Activated naive CD4-positive, alpha-beta T cell treated with anti-CD3 and anti-CD28 coated beads for 36 hours (primary cell): ENCODE measurements at regions of chr6 and their contacts with region 1.

Region 1: GRCh38 chr6:11317885-11318771 is 85.7 kb upstream of the NEDD9 start:
- DNase-seq: peak; percentile 91
- H3K4me3 Mint-ChIP-seq: no peak overlapping the region
- H3K27ac Mint-ChIP-seq: peak overlapping the region; percentile 90
- H3K4me1 Mint-ChIP-seq: peaks cover 43% of the 10 kb centered on the region
- H3K27me3 Mint-ChIP-seq: no peaks in the 10 kb centered on the region

Region 2: GRCh38 chr6:11198663-11199603 is 119.2 kb before region 1 on chr6:
- CTCF ChIA-PET with region 1: no interaction called
- intact Hi-C with region 1: loop called (anchors 1 kb)
- DNase-seq: peak; percentile 47
- H3K4me3 Mint-ChIP-seq: no peak overlapping the region
- H3K27ac Mint-ChIP-seq: peak overlapping the region; percentile 71
- H3K4me1 Mint-ChIP-seq: peaks cover 40% of the 10 kb centered on the region
- H3K27me3 Mint-ChIP-seq: no peaks in the 10 kb centered on the region

Region 3: DNA sequence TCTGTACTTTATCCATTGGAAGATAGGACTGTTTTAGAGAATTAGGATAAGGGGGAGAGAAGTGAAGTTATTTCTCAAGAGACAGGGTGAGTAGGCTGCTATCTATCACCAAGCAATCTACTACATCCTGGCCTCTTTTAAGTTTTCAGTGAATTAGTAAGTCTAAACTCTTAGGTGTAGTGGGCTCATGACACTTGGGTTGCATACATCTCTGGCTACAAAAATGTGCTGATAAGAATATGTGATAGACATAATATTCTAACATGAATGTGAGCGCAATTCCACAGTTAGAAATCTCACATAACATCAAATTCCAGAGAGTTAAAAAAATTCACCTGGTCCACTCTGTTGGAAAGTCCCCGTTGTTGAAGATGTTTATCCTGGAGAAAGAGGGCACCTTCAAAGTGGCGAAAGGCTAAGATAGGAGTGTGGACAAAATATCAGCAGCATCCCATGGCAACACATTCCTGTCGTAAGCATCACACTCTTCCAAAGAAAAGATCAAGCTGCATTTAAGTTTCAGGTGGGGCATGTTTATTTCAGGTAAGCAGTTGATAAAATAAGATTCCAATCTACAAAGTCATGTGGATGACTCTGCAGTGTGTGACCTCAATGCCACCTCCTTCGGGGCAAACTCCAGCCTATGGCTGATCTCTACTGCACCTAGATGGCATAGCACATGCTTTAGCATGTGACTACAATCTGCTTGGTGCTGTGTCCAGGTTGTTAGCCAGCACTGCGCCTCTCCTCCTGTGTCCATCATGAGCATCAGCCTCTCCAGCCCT is 26.0 kb after region 1 on chr6:
- CTCF ChIA-PET with region 1: no interaction called
- intact Hi-C with region 1: loop called (anchors 1 kb)
- DNase-seq: no peak
- H3K4me3 Mint-ChIP-seq: no peak overlapping the region
- H3K27ac Mint-ChIP-seq: peak overlapping the region; percentile 81
- H3K4me1 Mint-ChIP-seq: peaks cover 86% of the 10 kb centered on the region
- H3K27me3 Mint-ChIP-seq: no peaks in the 10 kb centered on the region

Region 4: GRCh38 chr6:11381801-11382513 is 63.8 kb after region 1 on chr6:
- CTCF ChIA-PET with region 1: interaction called, 3 read pairs
- intact Hi-C with region 1: loop called (anchors 1 kb)
- DNase-seq: peak; percentile 83
- H3K4me3 Mint-ChIP-seq: peak overlapping the region; percentile 86
- H3K27ac Mint-ChIP-seq: peak overlapping the region; percentile 91
- H3K4me1 Mint-ChIP-seq: peaks cover 57% of the 10 kb centered on the region
- H3K27me3 Mint-ChIP-seq: no peaks in the 10 kb centered on the region

Region 5: DNA sequence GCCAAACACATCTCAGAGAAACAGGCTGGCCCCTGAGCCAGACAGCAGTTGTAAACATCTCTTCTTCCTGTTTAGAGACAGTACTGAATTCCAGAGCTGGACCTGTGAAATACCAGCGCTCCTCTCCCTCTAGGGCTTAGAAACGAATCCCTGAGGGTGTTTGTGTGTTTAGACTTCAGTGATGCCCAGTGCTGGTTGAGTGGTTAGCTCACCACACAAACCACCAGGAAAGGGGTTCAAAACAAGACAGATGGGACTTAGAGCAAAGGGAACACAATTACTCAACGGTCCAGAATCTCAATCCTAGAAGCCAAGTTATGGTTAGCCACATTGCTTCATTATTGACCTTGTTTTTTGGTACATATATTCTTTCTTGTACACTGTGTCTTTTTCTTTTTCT is 110.8 kb after region 1 on chr6:
- CTCF ChIA-PET with region 1: no interaction called
- intact Hi-C with region 1: no loop called
- DNase-seq: no peak
- H3K4me3 Mint-ChIP-seq: no peak overlapping the region
- H3K27ac Mint-ChIP-seq: no peak overlapping the region
- H3K4me1 Mint-ChIP-seq: peaks cover 35% of the 10 kb centered on the region
- H3K27me3 Mint-ChIP-seq: no peaks in the 10 kb centered on the region

Region 6: DNA sequence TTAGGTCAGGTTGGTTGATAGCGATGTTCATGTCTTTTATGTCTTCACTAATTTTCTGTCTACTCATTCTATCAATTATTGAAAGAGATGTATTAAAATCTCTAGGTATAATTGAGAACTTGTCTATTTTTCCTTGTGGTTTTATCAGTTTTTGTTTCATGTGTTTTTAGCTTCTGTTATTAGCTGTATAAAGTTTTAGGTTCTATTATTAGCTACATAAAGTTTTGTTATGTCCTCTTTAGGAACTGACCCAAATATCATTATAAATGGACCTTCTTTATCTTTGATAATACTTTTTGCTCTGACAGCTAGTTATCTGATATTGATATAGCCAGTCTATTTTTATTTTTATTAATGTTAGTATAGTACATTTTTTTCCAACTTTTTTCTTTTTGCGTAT is 127.0 kb after region 1 on chr6:
- CTCF ChIA-PET with region 1: no interaction called
- intact Hi-C with region 1: loop called (anchors 1 kb)
- DNase-seq: no peak
- H3K4me3 Mint-ChIP-seq: no peak overlapping the region
- H3K27ac Mint-ChIP-seq: no peak overlapping the region
- H3K4me1 Mint-ChIP-seq: peaks cover 53% of the 10 kb centered on the region
- H3K27me3 Mint-ChIP-seq: no peaks in the 10 kb centered on the region